Aorta (tissue), 5 donors: ENCODE measurements at regions of chr1 and their contacts with region 1.

Region 1: GRCh38 chr1:24468685-24469316 is 33.8 kb upstream of the RCAN3 start:
- DNase-seq: no peak
- ATAC-seq: no peak
- H3K4me3 ChIP-seq: no peak overlapping the region
- H3K27ac ChIP-seq: no peak overlapping the region
- H3K4me1 ChIP-seq: no peaks in the 10 kb centered on the region
- H3K27me3 ChIP-seq: no peaks in the 10 kb centered on the region

Region 2: DNA sequence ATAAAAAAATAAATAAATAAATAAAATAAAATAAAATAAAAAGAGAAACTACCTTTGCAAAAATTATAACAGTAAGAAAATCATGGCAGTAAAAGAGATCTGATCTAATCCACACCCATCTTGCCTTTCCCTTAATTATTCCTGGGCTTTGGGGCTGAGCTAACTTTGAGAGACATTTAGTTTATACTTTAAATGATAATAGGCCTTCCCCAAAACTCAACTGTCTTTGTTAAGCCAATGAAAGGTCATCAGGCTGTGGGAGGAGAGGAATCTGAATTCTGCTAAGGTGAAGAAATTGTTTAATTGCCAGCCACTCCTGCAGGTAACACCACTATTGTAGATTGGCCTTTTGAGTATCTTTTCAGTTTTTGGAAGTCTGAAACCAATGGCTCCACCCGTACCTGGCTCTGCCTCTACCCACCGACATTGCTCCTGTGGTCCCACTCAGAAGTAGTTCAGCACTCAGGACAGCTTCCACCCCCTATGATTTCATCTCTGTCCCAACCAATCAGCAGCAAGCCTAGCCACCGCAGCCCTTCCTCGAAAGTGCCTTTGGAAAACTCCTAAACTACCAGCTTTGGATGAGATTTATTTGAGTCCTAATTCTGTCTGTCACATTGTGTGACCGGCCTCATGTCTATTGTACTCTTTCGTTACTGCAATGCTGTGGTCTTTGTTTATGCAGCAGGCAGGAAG is 532.2 kb before region 1 on chr1:
- intact Hi-C with region 1: no loop called
- DNase-seq: no peak
- ATAC-seq: no peak
- H3K4me3 ChIP-seq: no peak overlapping the region
- H3K27ac ChIP-seq: no peak overlapping the region
- H3K4me1 ChIP-seq: no peaks in the 10 kb centered on the region
- H3K27me3 ChIP-seq: no peaks in the 10 kb centered on the region

Region 3: DNA sequence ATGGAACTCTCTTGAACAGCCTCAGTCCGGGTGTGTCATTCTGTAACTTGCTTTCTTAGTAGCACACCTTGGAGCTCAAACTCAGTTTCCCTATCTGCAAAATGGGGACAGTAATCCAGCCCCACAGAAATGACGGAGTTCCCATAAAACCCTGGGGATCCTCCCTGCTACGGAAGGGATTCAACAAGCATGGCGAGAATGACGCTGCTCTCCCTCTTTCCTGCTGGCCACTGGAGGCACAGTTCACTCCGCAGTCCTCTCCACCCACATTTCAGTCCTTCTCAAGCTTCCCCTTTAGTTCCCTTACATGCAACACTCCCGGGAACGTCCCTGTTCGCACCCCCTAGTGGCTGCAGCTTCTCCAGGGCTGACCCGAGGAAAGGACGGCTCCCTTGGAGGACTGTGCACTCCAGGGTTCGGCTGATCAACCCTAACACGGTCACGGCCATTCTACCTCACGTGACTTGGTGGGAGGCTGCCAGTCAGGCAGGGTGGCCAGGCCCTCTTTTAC is 440.6 kb after region 1 on chr1:
- intact Hi-C with region 1: loop called in 1 of 2 experiments (anchors 5 kb)
- DNase-seq: peak; percentile 78 to 84
- ATAC-seq: no peak
- H3K4me3 ChIP-seq: no peak overlapping the region
- H3K27ac ChIP-seq: no peak overlapping the region
- H3K4me1 ChIP-seq: no peaks in the 10 kb centered on the region
- H3K27me3 ChIP-seq: no peaks in the 10 kb centered on the region